Natural killer cell (primary cell): ENCODE measurements at regions of chr3 and their contacts with region 1.

Region 1: GRCh38 chr3:98039322-98040024 is 4.4 kb upstream of the GABRR3 start:
- DNase-seq: peak; percentile 45 to 91
- ATAC-seq: peak; percentile 95 to 98 (median 98)
- H3K4me3 ChIP-seq: peak overlapping the region; percentile 9
- H3K4me3 Mint-ChIP-seq: peak overlapping the region; percentile 59
- H3K27ac ChIP-seq: peak overlapping the region; percentile 4
- H3K27ac Mint-ChIP-seq: peak overlapping the region; percentile 52 to 79
- H3K4me1 ChIP-seq: no peaks in the 10 kb centered on the region
- H3K4me1 Mint-ChIP-seq: peaks cover 7% of the 10 kb centered on the region in 2 donors
- H3K27me3 ChIP-seq: peaks cover 4% of the 10 kb centered on the region
- H3K27me3 Mint-ChIP-seq: peaks cover 3 to 28% of the 10 kb centered on the region in 2 donors
- CTCF ChIP-seq: peak; percentile 96

Region 2: DNA sequence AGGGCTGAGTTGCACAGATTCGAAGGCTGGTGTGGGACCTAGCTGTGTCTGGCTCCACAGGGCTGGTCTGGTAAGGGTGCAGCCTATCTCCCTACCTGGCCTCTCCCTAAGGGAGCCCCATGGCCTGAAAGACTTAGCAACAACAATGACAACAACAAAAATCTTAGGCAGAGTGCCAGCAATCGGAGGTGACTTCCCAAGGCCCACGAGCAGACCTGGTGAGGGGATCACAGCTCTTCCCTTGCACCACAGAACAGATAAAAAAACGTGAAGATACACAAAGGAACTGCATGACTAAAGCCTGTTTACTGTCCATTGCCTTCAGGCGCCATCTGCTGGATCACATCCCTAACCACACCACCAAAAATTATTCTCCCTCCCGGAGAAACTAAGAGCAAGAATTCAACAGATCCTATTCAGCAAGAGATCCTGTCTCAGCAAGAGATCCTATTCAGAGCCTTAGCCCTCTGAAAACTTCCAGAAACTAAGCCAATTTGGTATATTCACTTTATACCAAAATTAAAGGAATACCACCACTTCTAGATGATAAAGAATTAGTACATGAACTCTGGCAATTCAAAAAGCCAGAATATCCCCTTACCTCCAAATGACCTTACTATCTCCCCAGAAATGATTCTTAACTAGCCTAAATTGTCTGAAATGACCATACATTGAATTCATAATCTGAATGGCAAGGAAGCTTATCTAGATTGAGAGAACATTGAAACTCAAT is 290.1 kb after region 1 on chr3:
- intact Hi-C with region 1: loop called (anchors 1 kb)
- DNase-seq: peak in 1 of 2 donors; percentile 71
- ATAC-seq: peak; percentile 52 to 73 (median 60)
- H3K4me3 ChIP-seq: no peak overlapping the region
- H3K4me3 Mint-ChIP-seq: no peak overlapping the region
- H3K27ac ChIP-seq: no peak overlapping the region
- H3K27ac Mint-ChIP-seq: no peak overlapping the region
- H3K4me1 ChIP-seq: no peaks in the 10 kb centered on the region
- H3K4me1 Mint-ChIP-seq: no peaks in the 10 kb centered on the region
- H3K27me3 ChIP-seq: peaks cover 5% of the 10 kb centered on the region
- H3K27me3 Mint-ChIP-seq: peaks cover 23 to 30% of the 10 kb centered on the region in 2 donors
- CTCF ChIP-seq: peak; percentile 36